ENCODE measurements at regions of chr12 and their contacts with region 1.

Region 1: DNA sequence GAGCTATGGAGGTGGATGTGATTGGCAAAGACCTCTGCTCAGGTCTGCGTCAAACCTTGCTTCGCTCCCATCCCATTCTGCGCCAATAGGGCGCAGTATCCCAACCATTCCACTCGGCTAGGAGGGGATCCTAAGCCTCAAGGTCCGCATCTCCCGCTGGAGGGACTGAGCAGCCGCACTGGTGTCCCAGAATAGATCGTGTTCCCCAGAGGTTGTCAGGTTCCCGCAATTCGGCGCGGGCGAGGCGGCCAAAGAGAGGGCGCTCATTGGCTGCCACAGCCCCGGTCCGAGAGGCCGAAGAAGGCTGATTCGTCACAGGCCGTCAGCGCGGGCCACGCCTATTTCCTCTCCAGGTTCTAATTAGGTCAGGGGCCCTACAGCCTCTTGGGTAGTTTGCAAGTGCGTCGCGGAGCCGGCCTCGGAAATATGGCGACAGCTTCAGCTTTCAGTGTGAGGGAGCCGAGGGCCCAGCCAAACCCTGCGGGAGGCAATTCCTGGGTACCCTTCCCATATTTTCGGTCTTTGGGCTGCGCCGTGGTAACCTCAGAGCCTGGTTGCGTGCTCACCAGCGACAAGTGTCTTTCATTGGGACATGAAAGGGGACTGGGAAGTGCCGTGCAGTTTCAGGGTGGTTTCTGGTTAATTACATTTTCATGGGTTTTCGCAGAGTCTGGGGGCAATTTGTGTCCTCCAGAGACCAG is 5.0 kb downstream of the OR10AD1 start:
- DNase-seq: peak; percentile 98
- H3K4me3 Mint-ChIP-seq: peak overlapping the region; percentile 85
- H3K27ac Mint-ChIP-seq: peak overlapping the region; percentile 99
- H3K4me1 Mint-ChIP-seq: peaks cover 34% of the 10 kb centered on the region
- H3K27me3 Mint-ChIP-seq: peaks cover 3% of the 10 kb centered on the region

Region 2: GRCh38 chr12:47773062-47773857 is 424.9 kb before region 1 on chr12 and contains the start of gene SLC48A1:
- CTCF ChIA-PET with region 1: no interaction called
- intact Hi-C with region 1: no loop called
- DNase-seq: peak; percentile 79
- H3K4me3 Mint-ChIP-seq: peak within 1 kb of the TSS; percentile 90
- H3K27ac Mint-ChIP-seq: peak within 1 kb of the TSS; percentile 13
- H3K4me1 Mint-ChIP-seq: peaks cover 28% of the 10 kb centered on the region
- H3K27me3 Mint-ChIP-seq: no peaks in the 10 kb centered on the region
- total RNA-seq, gene SLC48A1: 16.6 to 21.0 TPM

Region 3: DNA sequence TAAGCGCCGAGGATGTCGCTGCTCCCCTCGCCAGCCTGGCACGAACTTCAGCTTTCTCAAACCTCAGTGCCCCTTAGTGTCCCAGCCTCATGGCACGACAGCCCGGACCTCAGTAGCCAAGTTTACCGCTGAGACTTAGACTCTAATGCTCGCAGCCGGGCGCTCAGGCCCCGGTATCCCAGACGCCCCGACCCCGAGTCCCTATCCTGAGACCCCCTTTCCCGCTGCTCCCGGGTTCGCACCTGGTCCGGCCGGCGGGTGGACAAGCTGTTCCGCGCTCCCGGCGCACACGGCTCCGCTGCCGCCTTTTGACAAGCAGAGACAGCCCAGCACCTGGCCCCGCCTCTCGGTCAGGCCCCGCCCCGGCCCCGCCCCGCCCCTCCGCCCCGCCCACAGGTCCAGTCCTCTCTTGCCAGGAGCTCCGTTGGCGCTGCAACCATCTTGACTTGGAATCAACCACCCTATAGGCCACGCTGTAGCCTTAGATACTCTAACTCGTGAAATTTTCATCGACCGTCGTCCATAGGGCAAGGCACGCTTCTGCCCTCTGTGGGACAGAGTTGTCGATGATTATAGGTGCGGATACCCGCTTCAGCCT is 293.3 kb before region 1 on chr12 and contains the start of gene VDR:
- CTCF ChIA-PET with region 1: no interaction called
- intact Hi-C with region 1: loop called (anchors 1 kb)
- DNase-seq: peak; percentile 81
- H3K4me3 Mint-ChIP-seq: peak within 1 kb of the TSS; percentile 98
- H3K27ac Mint-ChIP-seq: peak within 1 kb of the TSS; percentile 93
- H3K4me1 Mint-ChIP-seq: peaks cover 42% of the 10 kb centered on the region
- H3K27me3 Mint-ChIP-seq: peaks cover 19% of the 10 kb centered on the region
- total RNA-seq, gene VDR: 56.4 to 57.7 TPM

Region 4: GRCh38 chr12:47981496-47982260 is 216.4 kb before region 1 on chr12:
- CTCF ChIA-PET with region 1: no interaction called
- intact Hi-C with region 1: no loop called
- DNase-seq: no peak
- H3K4me3 Mint-ChIP-seq: no peak overlapping the region
- H3K27ac Mint-ChIP-seq: no peak overlapping the region
- H3K4me1 Mint-ChIP-seq: no peaks in the 10 kb centered on the region
- H3K27me3 Mint-ChIP-seq: no peaks in the 10 kb centered on the region

Region 5: GRCh38 chr12:48119078-48119833 is 78.9 kb before region 1 on chr12 and contains the start of gene PFKM:
- CTCF ChIA-PET with region 1: no interaction called
- intact Hi-C with region 1: loop called (anchors 1 kb)
- DNase-seq: peak; percentile 86
- H3K4me3 Mint-ChIP-seq: peak within 1 kb of the TSS; percentile 93
- H3K27ac Mint-ChIP-seq: peak within 1 kb of the TSS; percentile 51
- H3K4me1 Mint-ChIP-seq: peaks cover 19% of the 10 kb centered on the region
- H3K27me3 Mint-ChIP-seq: no peaks in the 10 kb centered on the region
- total RNA-seq, gene PFKM: 68.2 to 71.9 TPM

Region 6: DNA sequence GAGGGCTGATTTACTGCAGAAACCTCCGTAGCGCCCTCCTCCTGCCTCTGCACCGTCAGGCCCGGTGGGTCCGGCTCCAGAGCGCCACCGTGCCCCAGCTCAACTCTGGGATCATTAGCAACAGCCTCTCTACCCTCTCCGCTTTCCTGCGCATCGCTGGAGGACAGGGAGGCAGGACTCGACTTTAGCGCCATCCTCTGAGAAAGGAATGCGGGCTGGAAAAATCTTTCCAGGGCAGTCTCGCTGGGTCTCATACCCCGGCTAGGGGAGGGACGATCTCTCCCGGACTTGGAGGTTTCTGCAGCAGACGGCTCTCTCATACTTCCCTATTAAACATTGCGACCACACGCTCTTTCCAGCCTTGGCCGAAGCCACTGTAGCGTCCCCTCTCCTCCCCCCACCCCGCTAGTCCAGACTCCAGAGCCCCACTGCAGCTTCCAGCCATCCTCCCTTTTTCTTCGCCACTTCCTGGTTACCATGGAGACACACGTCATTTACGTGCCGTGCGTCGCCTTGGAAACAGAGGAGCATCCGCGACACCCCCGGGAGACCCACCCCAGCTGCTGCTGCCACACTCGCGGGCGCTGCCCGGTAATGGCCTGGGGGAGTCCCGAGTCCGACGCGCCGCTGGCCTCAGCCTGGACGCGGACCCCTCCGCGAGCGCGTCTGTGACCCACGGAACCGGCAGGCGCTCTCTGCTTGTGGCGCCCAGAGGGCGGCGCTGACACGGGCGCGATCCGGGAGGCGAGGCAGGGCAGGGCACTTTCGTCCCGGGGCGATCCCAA is 14.8 kb before region 1 on chr12 and contains the start of gene CCDC184:
- CTCF ChIA-PET with region 1: interaction called, 13 read pairs
- intact Hi-C with region 1: loop called (anchors 1 kb)
- DNase-seq: peak; percentile 70
- H3K4me3 Mint-ChIP-seq: peak within 1 kb of the TSS; percentile 88
- H3K27ac Mint-ChIP-seq: no peak within 1 kb of the TSS
- H3K4me1 Mint-ChIP-seq: peaks cover 12% of the 10 kb centered on the region
- H3K27me3 Mint-ChIP-seq: peaks cover 15% of the 10 kb centered on the region
- total RNA-seq, gene CCDC184: 0.14 TPM in 1 of 2 experiments, not detected in the other

Region 7: GRCh38 chr12:48350249-48351021 is 152.3 kb after region 1 on chr12 and contains the start of gene ZNF641:
- CTCF ChIA-PET with region 1: interaction called, 4 read pairs
- intact Hi-C with region 1: loop called (anchors 1 kb)
- DNase-seq: peak; percentile 79
- H3K4me3 Mint-ChIP-seq: peak within 1 kb of the TSS; percentile 91
- H3K27ac Mint-ChIP-seq: peak within 1 kb of the TSS; percentile 81
- H3K4me1 Mint-ChIP-seq: peaks cover 24% of the 10 kb centered on the region
- H3K27me3 Mint-ChIP-seq: no peaks in the 10 kb centered on the region
- total RNA-seq, gene ZNF641: 3.5 to 6.0 TPM

Region 8: DNA sequence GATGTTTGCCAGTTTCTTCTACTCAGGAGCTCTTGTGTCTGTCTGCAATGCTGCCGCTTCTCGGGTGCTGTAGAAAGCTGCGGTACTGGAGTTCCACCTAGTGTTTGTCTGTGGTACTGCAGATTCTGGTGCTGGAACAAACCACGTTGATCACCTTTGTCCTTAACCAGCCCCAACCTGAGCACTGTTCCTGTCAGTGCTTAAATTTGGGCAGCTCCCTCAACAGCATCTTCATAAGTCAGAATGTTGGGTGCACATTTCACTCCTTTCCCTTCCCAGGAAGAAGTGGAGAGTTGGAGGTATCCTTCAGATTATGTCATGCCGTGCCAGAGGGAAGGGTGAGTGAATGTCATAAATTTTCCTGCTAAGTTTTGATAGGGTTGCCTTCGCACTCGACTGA is 420.4 kb after region 1 on chr12:
- CTCF ChIA-PET with region 1: interaction called, 15 read pairs
- intact Hi-C with region 1: loop called (anchors 5 kb)
- DNase-seq: peak; percentile 90
- H3K4me3 Mint-ChIP-seq: no peak overlapping the region
- H3K27ac Mint-ChIP-seq: no peak overlapping the region
- H3K4me1 Mint-ChIP-seq: peaks cover 2% of the 10 kb centered on the region
- H3K27me3 Mint-ChIP-seq: peaks cover 7% of the 10 kb centered on the region

Measured in activated naive CD4-positive, alpha-beta T cell treated with anti-CD3 and anti-CD28 coated beads for 36 hours (primary cell).